ENCODE measurements at regions of chr2 and their contacts with region 1.

Region 1: DNA sequence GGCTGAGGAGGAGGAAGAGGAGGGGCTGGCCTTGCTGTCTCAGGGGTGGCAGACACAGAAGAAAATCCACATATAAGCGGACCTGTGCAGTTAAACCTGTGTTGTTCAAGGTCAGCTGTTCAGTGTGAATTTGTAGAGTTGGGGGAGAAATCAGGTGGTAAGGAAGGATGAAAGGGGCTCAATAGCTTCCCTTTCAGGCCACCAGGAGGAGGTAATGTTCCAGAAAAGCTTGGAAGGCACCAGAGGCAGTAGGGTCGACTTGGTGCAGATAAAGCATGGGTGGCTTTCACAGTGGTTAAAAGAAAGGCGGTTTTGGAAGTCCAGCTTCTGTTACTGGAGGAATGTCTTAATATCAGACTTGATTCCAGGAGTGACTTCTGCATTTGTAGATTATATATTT is 167.4 kb downstream of the THSD7B start:
- DNase-seq: peak; percentile 56
- H3K4me3 Mint-ChIP-seq: no peak overlapping the region
- H3K27ac Mint-ChIP-seq: no peak overlapping the region
- H3K4me1 Mint-ChIP-seq: no peaks in the 10 kb centered on the region
- H3K27me3 Mint-ChIP-seq: no peaks in the 10 kb centered on the region
- CTCF ChIP-seq: peak; percentile 64

Region 2: DNA sequence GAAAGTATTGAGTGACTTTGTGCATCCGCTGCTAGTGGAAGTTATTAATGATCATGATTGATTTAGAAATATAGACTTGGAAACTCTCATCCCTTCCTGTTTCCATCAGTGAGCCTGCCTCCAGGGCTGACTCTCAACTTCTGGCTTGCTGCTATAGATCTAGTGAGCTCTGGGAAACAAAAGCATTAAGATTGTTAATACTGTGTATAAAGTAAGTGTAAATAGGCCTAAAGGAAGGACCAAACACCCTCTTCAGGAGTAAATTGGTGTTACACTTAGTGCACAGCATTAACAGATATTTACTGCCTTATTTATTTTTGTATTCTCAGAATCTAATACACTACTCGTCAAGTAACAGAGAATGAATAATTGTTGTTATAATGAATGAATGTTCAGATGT is 118.2 kb after region 1 on chr2:
- CTCF ChIA-PET with region 1: interaction called, 10 read pairs
- POLR2A ChIA-PET with region 1: no interaction called
- intact Hi-C with region 1: no loop called
- DNase-seq: peak; percentile 43
- H3K4me3 Mint-ChIP-seq: no peak overlapping the region
- H3K27ac Mint-ChIP-seq: no peak overlapping the region
- H3K4me1 Mint-ChIP-seq: no peaks in the 10 kb centered on the region
- H3K27me3 Mint-ChIP-seq: no peaks in the 10 kb centered on the region
- CTCF ChIP-seq: peak; percentile 20

Region 3: GRCh38 chr2:137467246-137467862 is 534.7 kb after region 1 on chr2:
- CTCF ChIA-PET with region 1: interaction called, 5 read pairs
- POLR2A ChIA-PET with region 1: no interaction called
- intact Hi-C with region 1: loop called (anchors 1 kb)
- DNase-seq: peak; percentile 73
- H3K4me3 Mint-ChIP-seq: no peak overlapping the region
- H3K27ac Mint-ChIP-seq: no peak overlapping the region
- H3K4me1 Mint-ChIP-seq: no peaks in the 10 kb centered on the region
- H3K27me3 Mint-ChIP-seq: no peaks in the 10 kb centered on the region
- CTCF ChIP-seq: peak; percentile 60